Dorsolateral prefrontal cortex (tissue), 120 donors: ENCODE measurements at regions of chr7 and their contacts with region 1.

Region 1: DNA sequence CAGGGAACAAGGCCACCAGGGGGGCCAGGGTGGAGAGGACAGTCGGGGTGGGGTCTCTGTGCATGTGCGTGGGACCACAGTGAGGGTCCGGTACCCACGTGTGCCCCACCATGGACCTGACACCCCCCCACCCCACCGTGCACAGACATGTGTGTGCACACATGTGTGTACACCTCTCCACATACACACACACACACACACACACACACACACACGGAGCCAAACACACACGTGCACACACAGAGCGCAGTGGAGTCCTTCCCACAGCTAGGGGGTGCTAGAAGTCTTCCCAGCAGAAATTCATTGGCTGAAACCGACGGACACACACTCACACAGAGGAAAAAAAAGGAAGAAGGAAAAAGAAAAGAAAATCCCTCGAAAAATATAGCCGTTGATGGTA is 42.8 kb upstream of the GNA12 start:
- DNase-seq: peak in 1 of 10 donors; percentile 56
- H3K4me3 ChIP-seq: peak overlapping the region in 2 of 59 donors; percentile 21 to 35
- H3K27ac ChIP-seq: no peak overlapping the region
- H3K27me3 ChIP-seq: no peaks in the 10 kb centered on the region
- CTCF ChIP-seq: peak in 54 of 56 donors; percentile 31 to 72 (median 60)

Region 2: GRCh38 chr7:3154912-3155494 is 268.1 kb after region 1 on chr7:
- intact Hi-C with region 1: loop called (anchors 5 to 10 kb)
- DNase-seq: peak in 1 of 10 donors; percentile 8
- H3K4me3 ChIP-seq: no peak overlapping the region
- H3K27ac ChIP-seq: no peak overlapping the region
- H3K27me3 ChIP-seq: peaks cover 0 to 26% (median 0%) of the 10 kb centered on the region in 45 donors
- CTCF ChIP-seq: peak in 48 of 56 donors; percentile 18 to 62 (median 40)

Region 3: DNA sequence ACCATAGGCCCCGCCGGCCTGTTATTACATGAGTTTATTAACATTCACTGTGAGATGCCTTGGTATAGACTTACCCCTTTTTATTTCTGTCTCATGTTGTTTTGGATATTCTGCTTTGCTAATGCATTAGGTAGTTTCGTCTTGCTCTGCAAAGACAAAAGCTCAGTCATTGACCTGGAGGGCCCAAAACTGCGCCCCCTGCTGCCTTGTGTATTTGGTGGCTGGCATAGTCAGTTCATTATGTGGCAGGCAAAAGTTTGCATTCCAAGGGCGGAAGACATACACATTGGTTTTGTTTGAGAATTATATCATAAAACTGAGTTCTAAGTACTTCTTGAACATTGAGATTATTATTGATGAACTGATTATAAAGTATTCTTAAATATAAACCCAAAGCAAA is 786.6 kb after region 1 on chr7:
- intact Hi-C with region 1: loop called in 1 of 2 experiments (anchors 10 kb)
- DNase-seq: peak in 2 of 10 donors; percentile 36 to 47
- H3K4me3 ChIP-seq: no peak overlapping the region
- H3K27ac ChIP-seq: no peak overlapping the region
- H3K27me3 ChIP-seq: no peaks in the 10 kb centered on the region
- CTCF ChIP-seq: peak in 39 of 56 donors; percentile 11 to 63 (median 35)